AG04450 (cell line): ENCODE measurements at regions of chr20 and their contacts with region 1.

Region 1: DNA sequence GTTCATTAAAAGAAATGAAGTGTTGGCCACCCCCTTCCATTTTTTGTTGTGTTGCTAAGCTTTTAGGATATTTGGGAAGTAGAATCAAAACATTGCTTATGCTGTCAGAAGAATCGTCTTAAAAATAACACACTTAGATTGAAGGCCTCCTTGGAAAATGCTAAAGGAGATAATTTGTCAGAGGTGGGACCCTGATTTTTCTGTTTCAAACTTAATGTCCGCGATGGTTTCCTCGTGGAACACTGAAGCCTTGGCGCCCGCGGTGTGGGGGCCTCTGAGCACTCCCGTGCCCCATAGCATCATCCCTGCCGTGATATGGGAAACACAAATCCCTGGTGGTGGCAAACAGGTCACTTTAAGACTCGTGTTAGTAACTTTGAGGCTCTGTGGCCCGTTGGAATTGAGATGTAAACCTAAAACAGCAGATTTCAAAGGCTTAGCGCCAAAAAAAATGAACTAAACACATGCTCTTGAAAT is 9.1 kb upstream of the RBM38 start:
- DNase-seq: no peak
- H3K4me3 ChIP-seq: no peak overlapping the region
- H3K27ac ChIP-seq: no peak overlapping the region
- H3K27me3 ChIP-seq: no peaks in the 10 kb centered on the region
- CTCF ChIP-seq: no peak

Region 2: GRCh38 chr20:56974499-56975236 is 407.4 kb before region 1 on chr20:
- CTCF ChIA-PET with region 1: no interaction called
- POLR2A ChIA-PET with region 1: no interaction called
- DNase-seq: no peak
- H3K4me3 ChIP-seq: no peak overlapping the region
- H3K27ac ChIP-seq: no peak overlapping the region
- H3K27me3 ChIP-seq: peaks cover 5% of the 10 kb centered on the region
- CTCF ChIP-seq: peak; percentile 68

Region 3: GRCh38 chr20:57030611-57031600 is 351.2 kb before region 1 on chr20:
- CTCF ChIA-PET with region 1: no interaction called
- POLR2A ChIA-PET with region 1: no interaction called
- DNase-seq: no peak
- H3K4me3 ChIP-seq: no peak overlapping the region
- H3K27ac ChIP-seq: no peak overlapping the region
- H3K27me3 ChIP-seq: no peaks in the 10 kb centered on the region
- CTCF ChIP-seq: no peak

Region 4: GRCh38 chr20:57361212-57361915 is 20.7 kb before region 1 on chr20:
- CTCF ChIA-PET with region 1: interaction called, 24 read pairs
- POLR2A ChIA-PET with region 1: no interaction called
- DNase-seq: peak; percentile 47
- H3K4me3 ChIP-seq: no peak overlapping the region
- H3K27ac ChIP-seq: peak overlapping the region; percentile 72
- H3K27me3 ChIP-seq: no peaks in the 10 kb centered on the region
- CTCF ChIP-seq: no peak

Region 5: DNA sequence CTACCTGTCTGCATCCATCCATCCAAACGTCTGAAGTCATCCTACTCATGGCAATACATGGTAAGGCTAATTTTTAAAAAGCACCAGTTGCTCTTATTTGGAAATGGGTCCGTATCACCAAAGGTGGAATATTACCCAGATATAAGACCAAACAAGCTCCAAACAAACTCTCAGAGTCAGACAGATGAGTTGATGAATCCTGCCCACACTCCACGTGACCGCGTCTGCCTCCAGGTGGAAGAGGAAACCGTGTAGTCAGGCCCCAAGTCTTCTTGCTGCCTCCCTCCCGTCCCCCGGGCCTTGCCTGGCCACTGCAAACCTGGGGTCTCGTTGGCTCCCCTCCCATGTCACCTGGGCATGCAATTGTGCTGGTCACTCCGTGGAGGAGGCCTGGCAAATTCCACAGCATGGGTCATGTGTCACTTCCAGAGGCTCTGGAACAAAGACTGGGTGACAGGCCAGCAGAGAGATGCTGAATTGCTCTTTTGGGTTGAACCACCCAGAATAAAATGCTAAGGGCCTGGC is 111.1 kb after region 1 on chr20:
- CTCF ChIA-PET with region 1: interaction called, 38 read pairs
- POLR2A ChIA-PET with region 1: no interaction called
- DNase-seq: no peak
- H3K4me3 ChIP-seq: no peak overlapping the region
- H3K27ac ChIP-seq: no peak overlapping the region
- H3K27me3 ChIP-seq: no peaks in the 10 kb centered on the region
- CTCF ChIP-seq: no peak

Region 6: GRCh38 chr20:57498425-57499400 is 116.6 kb after region 1 on chr20:
- CTCF ChIA-PET with region 1: interaction called, 38 read pairs
- POLR2A ChIA-PET with region 1: interaction called, 7 read pairs
- DNase-seq: no peak
- H3K4me3 ChIP-seq: no peak overlapping the region
- H3K27ac ChIP-seq: no peak overlapping the region
- H3K27me3 ChIP-seq: peaks cover 12% of the 10 kb centered on the region
- CTCF ChIP-seq: peak; percentile 37